ENCODE measurements at regions of chr1 and their contacts with region 1.

Region 1: DNA sequence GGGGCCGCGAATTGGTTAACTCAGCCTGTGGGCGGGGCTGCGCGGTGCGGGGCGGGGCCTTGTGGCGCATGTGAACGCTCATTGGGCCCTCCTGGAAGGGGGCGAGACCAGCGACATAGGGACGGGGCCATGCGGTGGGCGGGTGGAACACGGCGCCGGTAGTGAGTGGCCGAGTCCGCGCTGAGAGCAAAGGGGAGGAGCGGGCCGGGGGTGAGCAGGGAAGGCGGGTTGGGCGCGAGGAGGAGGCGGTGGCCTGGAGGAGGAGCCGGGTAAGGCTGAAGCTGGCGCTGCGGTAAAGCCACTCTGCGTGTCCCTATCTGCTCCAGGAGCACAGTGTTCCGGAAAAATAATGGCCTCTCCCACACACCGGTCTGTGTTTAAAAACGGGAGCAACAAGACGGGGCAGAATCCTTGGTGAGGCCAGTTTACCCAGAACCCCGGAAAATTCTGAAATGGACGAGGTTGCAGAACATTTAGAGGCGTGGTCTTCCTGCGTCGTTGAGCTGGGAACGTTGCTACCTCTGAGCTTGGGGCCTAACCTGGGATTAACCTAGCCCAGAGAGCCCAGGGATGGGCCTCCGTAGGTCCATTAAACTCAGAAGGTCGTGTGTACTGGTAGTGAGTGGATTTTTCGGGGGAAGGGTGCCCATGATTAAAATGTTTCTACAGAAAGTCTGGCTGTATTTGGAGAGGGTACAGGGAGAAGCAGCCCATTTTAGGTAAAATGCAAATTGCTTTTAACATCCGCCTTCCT is 533 bp upstream of the CTNNBIP1 start:
- DNase-seq: peak; percentile 97 to 99 (median 98)
- H3K4me3 ChIP-seq: peak overlapping the region; percentile 61 to 97 (median 67)
- H3K4me3 Mint-ChIP-seq: peak overlapping the region; percentile 90 to 99
- H3K27ac ChIP-seq: peak overlapping the region; percentile 75 to 92
- H3K27ac Mint-ChIP-seq: peak overlapping the region; percentile 90 to 98 (median 97)
- H3K4me1 ChIP-seq: peaks cover 29 to 36% of the 10 kb centered on the region in 2 donors
- H3K4me1 Mint-ChIP-seq: peaks cover 46% of the 10 kb centered on the region
- H3K27me3 ChIP-seq: no peaks in the 10 kb centered on the region
- H3K27me3 Mint-ChIP-seq: peaks cover 0 to 4% (median 2%) of the 10 kb centered on the region in 3 donors
- CTCF ChIP-seq: no peak

Region 2: GRCh38 chr1:9651565-9652378 is 258.8 kb before region 1 on chr1 and contains the start of gene PIK3CD:
- intact Hi-C with region 1: no loop called
- DNase-seq: peak in 2 of 3 donors; percentile 46 to 54
- H3K4me3 ChIP-seq: peak within 1 kb of the TSS; percentile 67 to 96 (median 92)
- H3K4me3 Mint-ChIP-seq: peak within 1 kb of the TSS; percentile 97 to 99
- H3K27ac ChIP-seq: peak within 1 kb of the TSS; percentile 81
- H3K27ac Mint-ChIP-seq: peak within 1 kb of the TSS; percentile 90 to 98 (median 96)
- H3K4me1 ChIP-seq: peaks cover 55 to 63% of the 10 kb centered on the region in 2 donors
- H3K4me1 Mint-ChIP-seq: peaks cover 61% of the 10 kb centered on the region
- H3K27me3 ChIP-seq: no peaks in the 10 kb centered on the region
- H3K27me3 Mint-ChIP-seq: peaks cover 0 to 2% (median 0%) of the 10 kb centered on the region in 3 donors
- CTCF ChIP-seq: no peak
- polyA plus RNA-seq, gene PIK3CD: 33.2 to 120 (median 52.2) TPM

Region 3: DNA sequence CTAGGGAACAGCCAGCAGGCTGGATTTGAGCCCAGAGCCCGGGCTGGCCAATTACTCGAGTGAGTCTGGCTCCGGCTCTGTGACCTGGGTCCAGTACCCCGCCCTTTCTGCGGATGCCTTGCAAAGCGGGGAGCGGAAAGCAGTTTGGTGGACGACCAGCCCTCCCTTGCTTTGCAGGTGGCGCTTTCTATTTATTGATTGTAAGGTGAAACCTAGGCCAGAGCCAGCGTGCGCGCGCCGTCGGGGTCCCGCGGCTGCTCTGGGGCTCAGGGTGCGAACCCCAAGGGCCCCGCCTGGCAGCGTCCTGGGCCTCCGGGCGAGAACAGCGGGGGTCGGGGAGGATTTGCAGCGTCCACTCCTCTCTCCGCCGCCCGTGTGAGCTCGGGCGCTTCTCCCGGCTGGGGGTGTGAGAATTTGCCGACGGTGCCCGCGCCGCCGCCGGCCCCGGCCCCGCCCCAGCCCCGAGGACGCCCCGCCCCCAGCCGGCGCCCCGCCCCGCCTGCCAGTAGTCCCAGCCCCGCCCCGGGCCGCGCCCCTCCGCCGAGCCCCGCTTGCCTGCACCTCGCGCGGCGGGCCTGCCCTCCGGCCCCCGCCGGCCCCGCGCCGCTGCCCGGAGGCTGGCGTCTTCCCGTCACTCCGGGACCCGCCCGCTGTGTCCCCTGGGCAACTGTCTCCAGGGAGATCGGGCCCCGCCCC is 221.4 kb before region 1 on chr1:
- intact Hi-C with region 1: loop called in 1 of 2 experiments (anchors 10 kb)
- DNase-seq: peak; percentile 43 to 64 (median 61)
- H3K4me3 ChIP-seq: peak overlapping the region; percentile 33 to 75 (median 35)
- H3K4me3 Mint-ChIP-seq: peak overlapping the region; percentile 72 to 84
- H3K27ac ChIP-seq: peak overlapping the region in 1 of 2 donors; percentile 48
- H3K27ac Mint-ChIP-seq: peak overlapping the region in 3 of 7 donors; percentile 6 to 41 (median 32)
- H3K4me1 ChIP-seq: peaks cover 66 to 76% of the 10 kb centered on the region in 2 donors
- H3K4me1 Mint-ChIP-seq: peaks cover 72% of the 10 kb centered on the region
- H3K27me3 ChIP-seq: no peaks in the 10 kb centered on the region
- H3K27me3 Mint-ChIP-seq: peaks cover 0 to 3% (median 0%) of the 10 kb centered on the region in 3 donors
- CTCF ChIP-seq: no peak

Region 4: DNA sequence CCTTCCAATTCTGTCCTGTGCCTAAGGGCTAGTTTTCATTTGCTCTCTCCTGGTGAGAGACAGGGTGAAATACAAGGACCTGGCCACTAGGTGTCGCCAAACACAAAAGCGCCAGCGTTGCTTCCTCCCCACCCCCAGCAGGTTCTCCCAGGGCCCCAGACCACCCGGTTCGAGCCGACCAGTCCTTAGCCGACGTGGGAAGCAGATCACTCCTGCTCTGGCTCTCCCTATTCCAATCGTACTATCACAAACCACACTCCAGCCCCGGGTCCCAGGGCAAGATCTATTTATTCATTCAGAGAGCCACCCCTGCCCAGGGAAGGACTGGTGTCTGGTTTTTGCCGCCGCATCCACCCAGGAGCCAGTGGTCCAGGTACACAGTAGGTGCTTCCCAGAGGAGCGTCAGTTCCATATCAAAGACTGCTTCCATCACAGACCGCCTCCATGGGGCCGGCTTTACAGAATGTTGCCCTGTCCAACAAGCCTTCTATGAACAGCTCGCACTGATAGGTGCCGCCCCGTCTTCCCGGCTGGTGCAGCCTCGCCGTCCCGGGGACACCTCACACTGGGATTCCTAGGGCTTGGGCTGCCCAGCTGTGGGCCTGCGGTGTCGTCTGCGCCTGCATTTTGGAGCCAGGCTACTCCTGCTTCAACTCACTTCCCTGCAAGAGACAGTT is 35.5 kb before region 1 on chr1:
- intact Hi-C with region 1: loop called (anchors 5 kb)
- DNase-seq: peak; percentile 59 to 78 (median 74)
- H3K4me3 ChIP-seq: peak overlapping the region in 1 of 3 experiments; percentile 15
- H3K4me3 Mint-ChIP-seq: peak overlapping the region in 1 of 2 donors; percentile 41
- H3K27ac ChIP-seq: peak overlapping the region in 1 of 2 donors; percentile 26
- H3K27ac Mint-ChIP-seq: peak overlapping the region in 4 of 7 donors; percentile 63 to 84 (median 73)
- H3K4me1 ChIP-seq: peaks cover 5 to 6% of the 10 kb centered on the region in 2 donors
- H3K4me1 Mint-ChIP-seq: peaks cover 7% of the 10 kb centered on the region
- H3K27me3 ChIP-seq: no peaks in the 10 kb centered on the region
- H3K27me3 Mint-ChIP-seq: peaks cover 0 to 4% (median 0%) of the 10 kb centered on the region in 3 donors
- CTCF ChIP-seq: peak; percentile 90

Region 5: DNA sequence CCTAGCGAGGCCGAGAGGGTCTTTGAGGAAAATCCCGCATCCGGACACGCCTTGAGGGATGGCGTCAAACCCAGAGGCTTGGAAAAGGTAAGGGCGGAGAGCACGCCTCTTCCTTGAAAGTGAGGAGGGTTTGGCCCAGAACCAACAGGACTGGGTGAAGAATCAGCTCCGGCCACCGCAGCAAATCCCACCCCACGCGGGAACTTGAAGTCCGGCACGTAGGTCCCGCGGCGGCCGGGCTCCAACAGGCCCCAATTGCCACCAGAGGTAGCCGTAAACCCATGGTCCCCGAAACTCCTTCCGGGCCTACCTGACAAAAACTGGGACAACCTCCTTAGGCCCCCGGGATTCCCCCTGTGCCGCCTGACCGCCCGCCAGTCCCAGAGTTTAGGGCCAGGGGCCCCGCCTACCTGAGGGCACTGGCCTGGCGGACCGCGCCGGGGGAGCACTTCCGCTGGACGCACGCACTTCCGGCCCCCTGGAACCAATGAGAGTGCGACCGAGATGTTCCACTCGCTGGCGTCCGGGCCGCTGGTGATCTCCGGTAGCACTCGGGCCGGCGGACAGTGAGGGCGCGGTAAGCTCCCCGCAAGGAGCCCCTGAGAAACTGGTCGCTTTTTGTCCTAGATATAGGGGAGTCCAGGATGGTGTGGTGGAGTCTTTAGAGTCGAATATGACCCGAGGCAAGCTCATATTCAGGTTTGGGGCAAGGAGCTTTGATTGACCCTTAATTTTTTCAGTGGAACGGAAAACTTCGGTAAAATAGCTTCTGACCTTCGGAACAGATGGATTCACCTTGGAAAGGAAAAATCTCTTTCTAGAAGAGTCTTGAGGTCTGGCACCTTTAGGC is 32.6 kb after region 1 on chr1 and contains the starts of genes LZIC and NMNAT1:
- intact Hi-C with region 1: loop called in 1 of 2 experiments (anchors 2 kb)
- DNase-seq: peak; percentile 91 to 93 (median 92)
- H3K4me3 ChIP-seq: peak within 1 kb of the TSS; percentile 83 to 96 (median 96)
- H3K4me3 Mint-ChIP-seq: peak within 1 kb of the TSS; percentile 96 to 98
- H3K27ac ChIP-seq: peak within 1 kb of the TSS; percentile 85 to 95
- H3K27ac Mint-ChIP-seq: peak within 1 kb of the TSS; percentile 96 to 100 (median 97)
- H3K4me1 ChIP-seq: peaks cover 16 to 23% of the 10 kb centered on the region in 2 donors
- H3K4me1 Mint-ChIP-seq: peaks cover 22% of the 10 kb centered on the region
- H3K27me3 ChIP-seq: no peaks in the 10 kb centered on the region
- H3K27me3 Mint-ChIP-seq: peaks cover 0 to 4% (median 0%) of the 10 kb centered on the region in 3 donors
- CTCF ChIP-seq: no peak
- polyA plus RNA-seq, gene LZIC: 11.1 to 32.9 (median 28.2) TPM
- polyA plus RNA-seq, gene NMNAT1: 6.8 to 9.9 (median 7.1) TPM

Region 6: GRCh38 chr1:10032590-10033358 is 122.2 kb after region 1 on chr1 and contains the start of gene UBE4B:
- intact Hi-C with region 1: loop called in 1 of 2 experiments (anchors 10 kb)
- DNase-seq: peak; percentile 98 to 99 (median 98)
- H3K4me3 ChIP-seq: peak within 1 kb of the TSS; percentile 70 to 100 (median 94)
- H3K4me3 Mint-ChIP-seq: peak within 1 kb of the TSS; percentile 95 to 96
- H3K27ac ChIP-seq: peak within 1 kb of the TSS; percentile 87 to 96
- H3K27ac Mint-ChIP-seq: peak within 1 kb of the TSS; percentile 91 to 96 (median 96)
- H3K4me1 ChIP-seq: peaks cover 30 to 45% of the 10 kb centered on the region in 2 donors
- H3K4me1 Mint-ChIP-seq: peaks cover 43% of the 10 kb centered on the region
- H3K27me3 ChIP-seq: no peaks in the 10 kb centered on the region
- H3K27me3 Mint-ChIP-seq: no peaks in the 10 kb centered on the region
- CTCF ChIP-seq: peak; percentile 71
- polyA plus RNA-seq, gene UBE4B: 6.0 to 34.6 (median 9.2) TPM

Region 7: GRCh38 chr1:10283318-10283984 is 372.8 kb after region 1 on chr1:
- intact Hi-C with region 1: no loop called
- DNase-seq: no peak
- H3K4me3 ChIP-seq: no peak overlapping the region
- H3K4me3 Mint-ChIP-seq: no peak overlapping the region
- H3K27ac ChIP-seq: no peak overlapping the region
- H3K27ac Mint-ChIP-seq: no peak overlapping the region
- H3K4me1 ChIP-seq: no peaks in the 10 kb centered on the region
- H3K4me1 Mint-ChIP-seq: no peaks in the 10 kb centered on the region
- H3K27me3 ChIP-seq: no peaks in the 10 kb centered on the region
- H3K27me3 Mint-ChIP-seq: no peaks in the 10 kb centered on the region
- CTCF ChIP-seq: no peak

Region 8: DNA sequence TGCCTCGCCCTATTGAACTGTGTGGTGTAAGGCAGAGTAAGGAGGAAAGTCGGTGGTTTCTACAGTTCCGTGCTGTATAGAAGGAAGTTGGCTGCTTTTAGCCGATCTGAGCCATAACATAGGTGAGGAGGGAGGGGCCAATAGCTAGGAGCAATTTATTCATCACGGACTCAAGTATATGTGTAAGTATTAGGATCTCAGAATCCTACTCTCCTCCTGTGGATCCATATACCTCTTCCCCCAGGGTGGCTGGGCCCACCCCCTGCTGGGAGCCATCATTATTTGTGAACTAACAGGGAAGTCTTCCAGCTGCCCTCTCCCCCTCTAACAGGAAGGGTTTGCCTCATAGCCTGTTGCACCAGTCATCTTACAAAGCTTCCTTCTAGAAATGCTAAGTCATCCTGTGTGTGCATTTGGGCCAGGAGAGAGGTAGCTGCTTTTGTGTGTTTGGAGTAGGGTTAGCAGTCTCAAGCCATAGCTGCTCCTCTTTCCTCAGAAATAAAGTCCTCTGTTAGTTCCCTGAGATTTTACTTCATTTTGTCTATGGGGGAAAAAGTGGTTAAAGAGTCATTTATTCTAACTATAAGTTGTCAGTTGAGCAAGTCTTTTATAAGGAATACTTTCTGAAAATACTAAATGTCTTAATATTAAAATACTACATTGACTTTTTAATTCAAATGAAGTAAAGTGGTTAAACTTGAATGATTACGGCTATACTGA is 504.8 kb after region 1 on chr1:
- intact Hi-C with region 1: no loop called
- DNase-seq: peak; percentile 78 to 92 (median 91)
- H3K4me3 ChIP-seq: peak overlapping the region in 2 of 3 experiments; percentile 34 to 61
- H3K4me3 Mint-ChIP-seq: peak overlapping the region; percentile 68 to 87
- H3K27ac ChIP-seq: peak overlapping the region; percentile 76 to 88
- H3K27ac Mint-ChIP-seq: peak overlapping the region; percentile 93 to 99 (median 97)
- H3K4me1 ChIP-seq: peaks cover 33 to 42% of the 10 kb centered on the region in 2 donors
- H3K4me1 Mint-ChIP-seq: peaks cover 33% of the 10 kb centered on the region
- H3K27me3 ChIP-seq: no peaks in the 10 kb centered on the region
- H3K27me3 Mint-ChIP-seq: no peaks in the 10 kb centered on the region
- CTCF ChIP-seq: peak; percentile 11

Measured in CD14-positive monocyte (primary cell).